Activated naive CD4-positive, alpha-beta T cell treated with anti-CD3 and anti-CD28 coated beads for 36 hours (primary cell): ENCODE measurements at regions of chr2 and their contacts with region 1.

Region 1: GRCh38 chr2:62456721-62457539 is 49.1 kb downstream of the TMEM17 start:
- DNase-seq: peak; percentile 67
- H3K4me3 Mint-ChIP-seq: peak overlapping the region; percentile 15
- H3K27ac Mint-ChIP-seq: no peak overlapping the region
- H3K4me1 Mint-ChIP-seq: no peaks in the 10 kb centered on the region
- H3K27me3 Mint-ChIP-seq: peaks cover 8% of the 10 kb centered on the region

Region 2: GRCh38 chr2:62315476-62315875 is 141.5 kb before region 1 on chr2:
- CTCF ChIA-PET with region 1: no interaction called
- intact Hi-C with region 1: no loop called
- DNase-seq: no peak
- H3K4me3 Mint-ChIP-seq: no peak overlapping the region
- H3K27ac Mint-ChIP-seq: no peak overlapping the region
- H3K4me1 Mint-ChIP-seq: peaks cover 13% of the 10 kb centered on the region
- H3K27me3 Mint-ChIP-seq: no peaks in the 10 kb centered on the region

Region 3: GRCh38 chr2:62505750-62506420 is 49.0 kb after region 1 on chr2 and contains the start of gene TMEM17:
- CTCF ChIA-PET with region 1: no interaction called
- intact Hi-C with region 1: no loop called
- DNase-seq: peak; percentile 29
- H3K4me3 Mint-ChIP-seq: peak within 1 kb of the TSS; percentile 72
- H3K27ac Mint-ChIP-seq: no peak within 1 kb of the TSS
- H3K4me1 Mint-ChIP-seq: peaks cover 7% of the 10 kb centered on the region
- H3K27me3 Mint-ChIP-seq: peaks cover 24% of the 10 kb centered on the region
- total RNA-seq, gene TMEM17: 0.21 TPM in 1 of 2 experiments, not detected in the other

Region 4: GRCh38 chr2:62627667-62628066 is 170.7 kb after region 1 on chr2:
- CTCF ChIA-PET with region 1: no interaction called
- intact Hi-C with region 1: no loop called
- DNase-seq: no peak
- H3K4me3 Mint-ChIP-seq: no peak overlapping the region
- H3K27ac Mint-ChIP-seq: no peak overlapping the region
- H3K4me1 Mint-ChIP-seq: peaks cover 4% of the 10 kb centered on the region
- H3K27me3 Mint-ChIP-seq: peaks cover 3% of the 10 kb centered on the region

Region 5: DNA sequence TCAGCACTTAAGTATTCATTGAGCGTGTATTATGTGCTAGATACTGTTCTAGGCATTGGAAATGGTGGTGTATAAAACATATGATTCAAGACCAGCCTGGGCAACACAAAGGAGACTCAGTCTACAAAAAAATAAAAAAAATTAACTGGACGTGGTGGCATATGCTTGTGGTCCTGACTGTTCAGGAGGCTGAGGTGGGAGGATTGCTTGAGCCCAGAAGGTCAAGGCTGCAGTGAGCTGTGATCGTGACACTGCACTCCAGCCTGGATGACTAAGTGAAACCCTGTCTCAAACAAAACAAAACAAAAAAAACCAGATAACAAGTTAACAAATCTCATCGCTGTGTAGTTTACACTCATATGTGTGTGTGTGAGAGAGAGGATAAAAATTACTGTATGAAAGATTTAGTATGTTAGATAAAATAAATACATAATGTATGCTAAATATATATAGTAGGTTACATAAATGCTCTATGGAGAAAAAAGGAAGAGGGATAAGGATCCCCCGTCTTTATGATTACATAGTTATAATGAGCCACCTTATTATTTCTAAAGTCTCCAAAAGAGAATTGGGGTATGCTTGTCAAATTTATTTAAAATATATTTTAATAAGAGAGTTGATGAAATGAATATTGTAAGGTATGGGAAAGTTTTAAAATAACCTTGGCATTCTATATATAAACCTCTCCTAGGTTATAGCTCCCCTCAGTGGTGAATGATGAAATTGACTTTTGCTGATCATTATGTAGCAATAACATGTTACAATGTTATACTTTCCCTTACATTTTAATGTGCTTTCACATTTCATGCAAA is 317.8 kb after region 1 on chr2:
- CTCF ChIA-PET with region 1: interaction called, 75 read pairs
- intact Hi-C with region 1: loop called (anchors 1 kb)
- DNase-seq: no peak
- H3K4me3 Mint-ChIP-seq: no peak overlapping the region
- H3K27ac Mint-ChIP-seq: no peak overlapping the region
- H3K4me1 Mint-ChIP-seq: peaks cover 1% of the 10 kb centered on the region
- H3K27me3 Mint-ChIP-seq: no peaks in the 10 kb centered on the region

Region 6: GRCh38 chr2:63050334-63051041 is 593.6 kb after region 1 on chr2 and contains the start of gene OTX1:
- CTCF ChIA-PET with region 1: no interaction called
- intact Hi-C with region 1: loop called (anchors 5 kb)
- DNase-seq: peak; percentile 55
- H3K4me3 Mint-ChIP-seq: peak within 1 kb of the TSS; percentile 80
- H3K27ac Mint-ChIP-seq: no peak within 1 kb of the TSS
- H3K4me1 Mint-ChIP-seq: peaks cover 61% of the 10 kb centered on the region
- H3K27me3 Mint-ChIP-seq: peaks cover 79% of the 10 kb centered on the region
- total RNA-seq, gene OTX1: not detected

Region 7: GRCh38 chr2:63424329-63425078 is 967.6 kb after region 1 on chr2:
- CTCF ChIA-PET with region 1: interaction called, 3 read pairs
- intact Hi-C with region 1: loop called (anchors 1 kb)
- DNase-seq: no peak
- H3K4me3 Mint-ChIP-seq: no peak overlapping the region
- H3K27ac Mint-ChIP-seq: no peak overlapping the region
- H3K4me1 Mint-ChIP-seq: peaks cover 2% of the 10 kb centered on the region
- H3K27me3 Mint-ChIP-seq: no peaks in the 10 kb centered on the region

Region 8: GRCh38 chr2:63488118-63488713 is 1031.3 kb after region 1 on chr2:
- CTCF ChIA-PET with region 1: no interaction called
- intact Hi-C with region 1: loop called (anchors 5 kb)
- DNase-seq: peak; percentile 28
- H3K4me3 Mint-ChIP-seq: no peak overlapping the region
- H3K27ac Mint-ChIP-seq: no peak overlapping the region
- H3K4me1 Mint-ChIP-seq: no peaks in the 10 kb centered on the region
- H3K27me3 Mint-ChIP-seq: no peaks in the 10 kb centered on the region

Region 9: GRCh38 chr2:63544017-63544627 is 1087.2 kb after region 1 on chr2:
- CTCF ChIA-PET with region 1: interaction called, 4 read pairs
- intact Hi-C with region 1: loop called (anchors 2 kb)
- DNase-seq: no peak
- H3K4me3 Mint-ChIP-seq: no peak overlapping the region
- H3K27ac Mint-ChIP-seq: no peak overlapping the region
- H3K4me1 Mint-ChIP-seq: no peaks in the 10 kb centered on the region
- H3K27me3 Mint-ChIP-seq: no peaks in the 10 kb centered on the region